GM18951 (cell line): ENCODE measurements at regions of chr19 and their contacts with region 1.

Region 1: GRCh38 chr19:9914315-9915207 is 21.8 kb downstream of the OLFM2 start:
- POLR2A ChIP-seq: no peak

Region 2: GRCh38 chr19:9140159-9140874 is 774.2 kb before region 1 on chr19 and contains the start of gene ZNF317:
- in situ Hi-C with region 1: loop called (anchors 25 kb)
- POLR2A ChIP-seq: peak; percentile 84